Heart left ventricle (tissue), 16 donors: ENCODE measurements at regions of chr20 and their contacts with region 1.

Region 1: GRCh38 chr20:11929947-11930346 is 12.3 kb downstream of the BTBD3 start:
- DNase-seq: no peak
- ATAC-seq: no peak
- H3K4me3 ChIP-seq: no peak overlapping the region
- H3K27ac ChIP-seq: no peak overlapping the region
- H3K4me1 ChIP-seq: peaks cover 0 to 5% (median 0%) of the 10 kb centered on the region in 12 donors
- H3K27me3 ChIP-seq: no peaks in the 10 kb centered on the region
- CTCF ChIP-seq: no peak
- POLR2A ChIP-seq: no peak

Region 2: DNA sequence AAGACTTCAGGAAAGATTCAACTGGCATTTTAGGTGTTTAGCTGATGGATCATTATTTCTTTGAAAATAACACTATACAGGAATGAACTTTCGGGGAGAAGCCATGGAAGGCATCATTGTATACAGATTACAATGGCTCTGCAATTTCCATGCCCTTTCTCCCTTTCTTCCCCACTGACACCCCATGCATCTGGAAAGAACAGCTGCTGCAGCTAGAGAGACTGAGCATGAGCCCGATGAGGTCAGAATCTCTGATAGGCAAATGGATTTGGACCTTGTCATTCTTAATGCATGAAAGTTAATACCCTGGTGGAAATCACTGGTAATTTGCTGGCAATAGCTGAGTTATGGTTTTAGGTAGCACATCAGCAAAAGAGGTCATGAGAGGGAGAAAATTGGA is 42.5 kb after region 1 on chr20:
- intact Hi-C with region 1: loop called in 1 of 10 experiments (anchors 5 kb)
- DNase-seq: no peak
- ATAC-seq: no peak
- H3K4me3 ChIP-seq: no peak overlapping the region
- H3K27ac ChIP-seq: no peak overlapping the region
- H3K4me1 ChIP-seq: no peaks in the 10 kb centered on the region
- H3K27me3 ChIP-seq: no peaks in the 10 kb centered on the region
- CTCF ChIP-seq: no peak
- POLR2A ChIP-seq: no peak

Region 3: GRCh38 chr20:12564979-12565378 is 635.0 kb after region 1 on chr20:
- intact Hi-C with region 1: no loop called
- DNase-seq: no peak
- ATAC-seq: no peak
- H3K4me3 ChIP-seq: no peak overlapping the region
- H3K27ac ChIP-seq: no peak overlapping the region
- H3K4me1 ChIP-seq: no peaks in the 10 kb centered on the region
- H3K27me3 ChIP-seq: peaks cover 0 to 4% (median 0%) of the 10 kb centered on the region in 9 donors
- CTCF ChIP-seq: no peak
- POLR2A ChIP-seq: no peak